Activated T-helper 2 cell treated with anti-CD3 and anti-CD28 coated beads, Interferon-gamma antibody, Interleukin-2, Interleukin-4, amounts not matched to agents 10 μg/mL and 5 μg/mL and 100 μg/mL, durations not matched to agents 14 hours and 24 hours and 36 hours (primary cell): ENCODE measurements at regions of chr1 and their contacts with region 1.

Region 1: GRCh38 chr1:235855811-235856429 is 10.8 kb downstream of the LYST start:
- DNase-seq: no peak
- H3K4me3 Mint-ChIP-seq: no peak overlapping the region
- H3K27ac Mint-ChIP-seq: peak overlapping the region; percentile 86
- H3K4me1 Mint-ChIP-seq: peaks cover 48% of the 10 kb centered on the region
- H3K27me3 Mint-ChIP-seq: no peaks in the 10 kb centered on the region

Region 2: GRCh38 chr1:235504496-235505222 is 351.3 kb before region 1 on chr1:
- intact Hi-C with region 1: loop called (anchors 5 kb)
- DNase-seq: peak; percentile 98
- H3K4me3 Mint-ChIP-seq: peak overlapping the region; percentile 94
- H3K27ac Mint-ChIP-seq: peak overlapping the region; percentile 92
- H3K4me1 Mint-ChIP-seq: peaks cover 32% of the 10 kb centered on the region
- H3K27me3 Mint-ChIP-seq: peaks cover 6% of the 10 kb centered on the region

Region 3: DNA sequence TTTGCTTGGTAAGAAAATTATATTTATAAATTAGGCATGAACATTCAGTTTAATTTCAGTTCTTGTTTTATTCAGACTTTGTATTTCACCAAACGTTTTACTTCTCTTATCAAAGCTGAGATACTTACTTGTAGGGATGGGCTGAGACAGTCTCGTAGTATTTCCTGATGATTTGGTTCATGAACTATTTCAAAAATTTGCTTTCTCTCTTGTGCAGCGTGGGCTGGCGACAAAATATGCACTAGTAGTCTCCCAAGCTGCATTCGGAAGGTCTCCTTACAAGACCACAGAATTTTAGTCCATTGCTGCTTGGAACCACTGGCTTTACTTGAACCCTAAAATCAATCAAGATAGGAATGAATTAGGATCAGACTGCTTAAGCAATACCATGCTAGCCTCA is 114.6 kb before region 1 on chr1:
- intact Hi-C with region 1: no loop called
- DNase-seq: no peak
- H3K4me3 Mint-ChIP-seq: no peak overlapping the region
- H3K27ac Mint-ChIP-seq: no peak overlapping the region
- H3K4me1 Mint-ChIP-seq: peaks cover 4% of the 10 kb centered on the region
- H3K27me3 Mint-ChIP-seq: no peaks in the 10 kb centered on the region

Region 4: DNA sequence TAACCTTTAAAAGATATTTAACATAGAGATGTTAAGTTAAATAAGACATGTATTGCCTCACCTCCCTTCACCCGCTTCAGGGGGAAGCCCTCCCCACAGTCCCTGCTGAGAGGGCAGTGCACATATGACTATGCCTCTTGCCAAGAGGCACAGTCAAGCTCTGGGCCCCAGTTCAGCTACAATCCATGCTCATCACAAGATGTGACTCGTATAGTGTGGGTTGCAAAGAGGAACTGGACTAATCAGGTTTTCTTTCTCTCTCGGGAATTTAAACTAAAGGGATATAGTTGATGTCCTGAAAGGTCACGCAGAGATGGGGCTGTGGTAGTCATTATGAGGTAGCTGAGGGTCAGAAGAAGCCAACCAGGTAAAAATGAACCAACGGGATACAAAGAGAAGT is 24.8 kb before region 1 on chr1:
- intact Hi-C with region 1: loop called (anchors 1 kb)
- DNase-seq: no peak
- H3K4me3 Mint-ChIP-seq: no peak overlapping the region
- H3K27ac Mint-ChIP-seq: peak overlapping the region; percentile 25
- H3K4me1 Mint-ChIP-seq: peaks cover 8% of the 10 kb centered on the region
- H3K27me3 Mint-ChIP-seq: no peaks in the 10 kb centered on the region

Region 5: DNA sequence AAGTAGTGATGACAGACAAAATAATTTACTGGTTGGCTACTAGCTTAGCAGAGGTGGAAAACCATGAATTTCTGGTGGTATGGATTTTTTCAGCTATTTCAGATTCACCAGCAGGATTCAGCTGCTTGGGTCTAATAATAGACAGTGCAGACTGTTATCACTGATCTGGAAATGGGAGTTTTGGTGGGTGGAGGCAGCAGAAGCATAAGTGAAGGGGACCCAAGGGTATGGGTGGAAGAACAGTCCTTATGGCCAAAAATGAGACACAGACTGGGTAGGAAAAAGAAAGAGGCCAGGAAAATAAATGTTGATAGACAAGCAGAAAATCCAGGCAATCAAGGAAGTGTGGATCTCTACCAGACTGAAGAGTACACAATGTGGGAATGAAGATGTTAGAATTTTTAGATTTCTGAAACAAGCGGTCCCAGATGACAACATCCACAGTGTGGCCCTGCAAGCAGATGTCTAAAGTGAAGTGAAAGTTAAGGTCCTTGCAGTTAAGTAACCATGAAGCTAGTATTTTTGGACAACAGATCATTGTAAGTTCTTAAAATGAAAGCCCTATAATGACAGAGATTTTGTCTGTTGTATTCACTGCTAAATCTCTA is 13.9 kb before region 1 on chr1:
- intact Hi-C with region 1: no loop called
- DNase-seq: no peak
- H3K4me3 Mint-ChIP-seq: no peak overlapping the region
- H3K27ac Mint-ChIP-seq: no peak overlapping the region
- H3K4me1 Mint-ChIP-seq: peaks cover 42% of the 10 kb centered on the region
- H3K27me3 Mint-ChIP-seq: no peaks in the 10 kb centered on the region

Region 6: DNA sequence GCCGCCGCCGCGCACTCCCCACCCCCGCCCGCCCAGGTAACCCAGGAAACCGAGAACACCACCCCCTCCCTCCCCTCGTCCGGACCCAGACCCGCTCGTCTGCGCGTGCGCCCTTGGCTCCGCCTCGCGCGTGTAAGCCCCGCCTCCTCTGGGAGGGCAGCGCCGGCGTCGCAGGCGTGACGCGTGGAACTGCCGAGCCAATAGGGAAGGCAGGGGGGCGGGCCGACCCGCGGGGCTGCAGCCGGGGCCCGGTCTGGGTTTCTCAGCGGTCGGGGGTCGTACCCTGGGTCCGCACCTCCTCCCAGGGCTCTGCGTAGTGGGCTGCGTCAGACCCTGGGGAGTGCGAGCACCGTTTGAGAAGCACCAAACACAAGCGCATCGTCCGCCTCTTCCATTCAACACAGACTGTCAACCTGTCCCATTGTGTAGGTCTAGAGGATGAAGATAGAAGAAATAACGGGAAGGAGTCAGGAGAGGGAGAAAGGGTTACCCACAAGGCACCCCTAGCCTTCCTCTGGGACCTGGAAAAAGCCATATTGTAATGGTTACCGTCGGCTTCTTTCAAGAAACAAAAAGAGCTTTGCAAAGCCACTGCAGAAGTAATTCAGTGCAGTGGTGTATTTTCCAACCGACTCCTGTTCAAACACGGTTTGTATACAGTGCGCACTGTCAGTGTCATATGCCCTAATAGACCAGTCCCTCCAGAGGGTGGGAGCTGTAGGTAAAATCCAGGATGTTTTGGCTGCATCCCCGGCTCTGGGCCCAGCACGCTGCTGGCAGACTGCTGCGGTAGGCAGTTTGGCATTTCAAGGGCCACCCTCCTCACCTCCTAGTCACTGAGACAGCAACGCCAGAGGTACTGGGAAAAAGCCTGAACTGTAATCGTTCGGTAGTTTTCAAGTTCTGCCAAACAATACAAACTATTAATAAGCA is 11.3 kb after region 1 on chr1:
- intact Hi-C with region 1: loop called (anchors 1 kb)
- DNase-seq: peak; percentile 97
- H3K4me3 Mint-ChIP-seq: peak overlapping the region; percentile 98
- H3K27ac Mint-ChIP-seq: peak overlapping the region; percentile 99
- H3K4me1 Mint-ChIP-seq: peaks cover 52% of the 10 kb centered on the region
- H3K27me3 Mint-ChIP-seq: no peaks in the 10 kb centered on the region

Region 7: GRCh38 chr1:235883261-235883927 is 27.5 kb after region 1 on chr1:
- intact Hi-C with region 1: loop called (anchors 1 kb)
- DNase-seq: no peak
- H3K4me3 Mint-ChIP-seq: peak overlapping the region; percentile 63
- H3K27ac Mint-ChIP-seq: peak overlapping the region; percentile 67
- H3K4me1 Mint-ChIP-seq: peaks cover 46% of the 10 kb centered on the region
- H3K27me3 Mint-ChIP-seq: no peaks in the 10 kb centered on the region